ENCODE measurements at regions of chr20 and their contacts with region 1.

Region 1: DNA sequence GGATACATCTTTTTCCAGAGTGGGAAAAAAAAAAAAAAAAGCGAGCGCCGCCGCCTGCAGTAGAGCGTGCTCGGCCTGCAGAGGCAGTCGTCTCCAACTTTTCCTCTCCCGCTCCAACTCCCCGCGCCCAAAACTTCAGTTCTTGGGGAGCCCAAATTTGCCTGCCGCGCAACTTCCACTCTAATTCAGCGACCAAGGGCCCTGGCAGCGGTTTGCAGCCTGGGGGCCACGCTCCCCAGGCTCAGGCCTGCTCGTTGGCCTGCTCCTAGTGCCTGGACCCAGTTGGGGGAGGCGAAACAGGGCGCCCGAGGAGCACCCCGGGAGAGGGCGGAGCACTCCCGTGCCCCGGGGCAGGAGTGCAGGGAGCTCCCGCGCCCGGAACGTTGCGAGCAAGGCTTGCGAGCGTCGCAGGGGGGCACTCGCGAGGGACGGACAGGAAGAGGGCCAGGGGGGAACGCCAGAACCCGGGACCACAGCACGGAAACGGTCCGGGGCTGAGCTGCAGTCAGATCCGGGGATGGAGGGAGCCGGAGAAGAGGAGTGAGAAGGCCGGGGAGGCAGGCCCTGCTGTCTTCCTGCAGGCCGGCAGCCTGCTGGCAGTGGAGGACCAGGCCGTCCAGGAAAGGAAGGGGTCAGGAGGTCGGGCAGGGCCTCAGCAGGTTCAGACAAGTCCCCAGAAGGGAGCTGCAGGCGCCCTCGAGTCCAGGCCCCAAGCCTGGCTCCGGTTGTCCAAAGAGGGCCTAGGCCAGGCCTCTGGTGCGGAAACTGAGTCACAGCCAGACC is at the start of gene STX16:
- DNase-seq: peak; percentile 91
- ATAC-seq: peak; percentile 79
- H3K4me3 Mint-ChIP-seq: peak within 1 kb of the TSS; percentile 99
- H3K27ac Mint-ChIP-seq: peak within 1 kb of the TSS; percentile 99
- H3K4me1 Mint-ChIP-seq: peaks cover 16% of the 10 kb centered on the region
- H3K27me3 Mint-ChIP-seq: no peaks in the 10 kb centered on the region
- total RNA-seq, gene STX16: 128 to 136 TPM

Region 2: GRCh38 chr20:58309575-58310290 is 341.2 kb before region 1 on chr20 and contains the start of gene RAB22A:
- CTCF ChIA-PET with region 1: no interaction called
- POLR2A ChIA-PET with region 1: interaction called, 18 read pairs
- DNase-seq: peak; percentile 86
- ATAC-seq: peak; percentile 68
- H3K4me3 Mint-ChIP-seq: peak within 1 kb of the TSS; percentile 93
- H3K27ac Mint-ChIP-seq: peak within 1 kb of the TSS; percentile 87
- H3K4me1 Mint-ChIP-seq: peaks cover 65% of the 10 kb centered on the region
- H3K27me3 Mint-ChIP-seq: no peaks in the 10 kb centered on the region
- total RNA-seq, gene RAB22A: 16.0 to 17.3 TPM

Region 3: GRCh38 chr20:58407966-58408557 is 242.9 kb before region 1 on chr20:
- CTCF ChIA-PET with region 1: no interaction called
- POLR2A ChIA-PET with region 1: no interaction called
- DNase-seq: no peak
- ATAC-seq: peak; percentile 49
- H3K4me3 Mint-ChIP-seq: no peak overlapping the region
- H3K27ac Mint-ChIP-seq: peak overlapping the region; percentile 37
- H3K4me1 Mint-ChIP-seq: peaks cover 25% of the 10 kb centered on the region
- H3K27me3 Mint-ChIP-seq: no peaks in the 10 kb centered on the region

Region 4: DNA sequence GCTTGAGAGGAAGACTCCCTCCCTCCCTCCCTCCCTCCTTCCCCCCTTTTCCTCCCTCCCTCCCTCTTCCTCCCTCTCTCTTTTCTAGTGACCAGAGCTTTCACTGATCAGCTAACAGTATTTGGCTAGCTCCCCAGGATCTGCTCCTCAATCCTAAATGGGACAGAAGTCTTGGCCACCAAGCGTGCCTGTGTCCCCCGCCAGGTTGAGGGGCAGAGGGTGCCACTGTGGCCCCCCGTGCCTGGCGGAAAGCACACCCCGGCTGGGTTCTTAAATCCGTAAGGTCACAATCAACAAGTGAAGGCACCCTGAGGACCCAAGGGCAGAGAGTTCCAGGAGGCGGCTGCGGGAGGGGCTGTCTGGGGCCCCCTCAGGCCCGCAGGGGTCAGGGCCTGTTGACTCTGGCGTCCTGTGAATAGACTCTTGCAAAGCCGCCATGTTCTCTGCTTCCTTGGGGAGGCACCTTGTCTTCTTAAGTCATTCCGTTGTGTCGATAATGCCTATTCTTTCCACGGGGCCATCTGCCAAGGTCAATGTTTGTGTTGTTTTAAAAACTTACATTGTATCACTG is 38.8 kb before region 1 on chr20:
- CTCF ChIA-PET with region 1: no interaction called
- POLR2A ChIA-PET with region 1: no interaction called
- DNase-seq: no peak
- ATAC-seq: no peak
- H3K4me3 Mint-ChIP-seq: no peak overlapping the region
- H3K27ac Mint-ChIP-seq: no peak overlapping the region
- H3K4me1 Mint-ChIP-seq: no peaks in the 10 kb centered on the region
- H3K27me3 Mint-ChIP-seq: no peaks in the 10 kb centered on the region

Region 5: GRCh38 chr20:58667975-58668374 is 17.0 kb after region 1 on chr20:
- CTCF ChIA-PET with region 1: interaction called, 8 read pairs
- POLR2A ChIA-PET with region 1: interaction called, 100 read pairs
- DNase-seq: no peak
- ATAC-seq: no peak
- H3K4me3 Mint-ChIP-seq: no peak overlapping the region
- H3K27ac Mint-ChIP-seq: peak overlapping the region; percentile 40
- H3K4me1 Mint-ChIP-seq: peaks cover 43% of the 10 kb centered on the region
- H3K27me3 Mint-ChIP-seq: no peaks in the 10 kb centered on the region

Region 6: GRCh38 chr20:58703264-58703663 is 52.3 kb after region 1 on chr20:
- CTCF ChIA-PET with region 1: interaction called, 10 read pairs
- POLR2A ChIA-PET with region 1: no interaction called
- DNase-seq: no peak
- ATAC-seq: no peak
- H3K4me3 Mint-ChIP-seq: no peak overlapping the region
- H3K27ac Mint-ChIP-seq: no peak overlapping the region
- H3K4me1 Mint-ChIP-seq: peaks cover 6% of the 10 kb centered on the region
- H3K27me3 Mint-ChIP-seq: no peaks in the 10 kb centered on the region

Region 7: DNA sequence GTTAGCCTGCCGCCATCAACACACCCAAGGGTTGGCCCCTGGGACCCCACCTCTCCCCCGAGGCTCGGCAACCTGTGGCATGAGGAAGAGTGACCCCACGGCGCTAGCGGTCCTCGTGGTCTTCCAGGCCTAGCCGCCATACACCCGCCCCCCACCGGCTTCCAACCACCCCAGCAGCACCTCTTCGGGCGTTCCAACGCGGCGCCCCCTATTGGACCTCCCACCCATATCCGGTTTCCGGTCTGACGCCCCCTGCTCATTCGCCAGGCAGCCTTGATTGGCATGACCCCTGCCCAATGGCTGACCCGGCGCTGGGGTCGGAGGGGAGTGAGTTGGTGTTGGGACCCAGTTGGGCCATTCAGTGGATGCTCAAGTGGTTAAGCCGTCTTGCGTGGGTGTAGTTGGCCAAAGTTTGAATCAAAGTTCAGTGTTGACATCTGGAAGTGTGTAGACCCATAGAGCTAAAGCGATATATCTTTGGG is 199.8 kb after region 1 on chr20 and contains the start of gene GNAS-AS1:
- CTCF ChIA-PET with region 1: interaction called, 12 read pairs
- POLR2A ChIA-PET with region 1: interaction called, 5 read pairs
- DNase-seq: peak; percentile 84
- ATAC-seq: peak; percentile 79
- H3K4me3 Mint-ChIP-seq: peak within 1 kb of the TSS; percentile 80
- H3K27ac Mint-ChIP-seq: no peak within 1 kb of the TSS
- H3K4me1 Mint-ChIP-seq: peaks cover 58% of the 10 kb centered on the region
- H3K27me3 Mint-ChIP-seq: peaks cover 48% of the 10 kb centered on the region
- total RNA-seq, gene GNAS-AS1: 1.3 to 2.0 TPM

Region 8: DNA sequence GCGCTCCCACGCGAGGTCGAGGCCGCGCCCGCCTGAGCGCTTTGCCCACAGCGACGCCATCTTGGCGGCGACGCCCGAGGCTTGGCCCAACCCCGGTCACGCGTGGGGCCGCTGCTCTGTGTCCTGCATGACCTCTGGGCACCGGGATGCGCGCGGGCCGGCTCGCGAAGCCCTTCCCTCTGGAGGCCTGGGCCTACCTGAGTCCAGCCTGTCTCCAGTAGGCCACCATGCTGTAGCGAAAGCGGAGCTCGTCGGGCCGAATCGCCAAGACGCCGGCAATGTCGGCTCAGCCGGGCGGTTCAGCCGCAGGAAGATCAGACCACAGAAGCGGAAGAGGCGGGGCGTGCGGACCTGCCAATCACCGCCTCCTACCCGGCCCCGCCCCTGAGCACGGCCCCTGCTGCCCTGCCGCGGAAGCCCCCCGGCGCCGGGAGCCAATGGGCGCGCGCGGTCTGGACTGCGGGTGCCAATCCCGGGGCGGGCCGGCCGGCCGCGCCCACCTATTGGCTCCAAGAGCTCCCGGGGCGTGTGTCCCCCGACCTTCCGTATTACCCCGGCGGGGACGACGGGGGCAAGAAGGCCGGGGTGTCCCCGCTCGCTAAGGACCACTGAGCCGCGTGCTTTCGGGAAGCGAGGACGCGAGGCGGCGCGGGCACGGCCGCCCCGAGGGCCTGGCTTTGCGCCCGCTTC is 381.2 kb after region 1 on chr20 and contains the start of gene ATP5F1E:
- CTCF ChIA-PET with region 1: interaction called, 10 read pairs
- POLR2A ChIA-PET with region 1: interaction called, 6 read pairs
- DNase-seq: peak; percentile 97
- ATAC-seq: peak; percentile 98
- H3K4me3 Mint-ChIP-seq: peak within 1 kb of the TSS; percentile 93
- H3K27ac Mint-ChIP-seq: peak within 1 kb of the TSS; percentile 95
- H3K4me1 Mint-ChIP-seq: peaks cover 55% of the 10 kb centered on the region
- H3K27me3 Mint-ChIP-seq: no peaks in the 10 kb centered on the region
- total RNA-seq, gene ATP5F1E: 97.8 to 98.8 TPM